CD8-positive, alpha-beta T cell (primary cell): ENCODE measurements at regions of chr10 and their contacts with region 1.

Region 1: GRCh38 chr10:118720685-118721538 is 33.9 kb downstream of the CACUL1 start:
- DNase-seq: peak in 8 of 9 experiments; percentile 32 to 75 (median 70)
- ATAC-seq: peak; percentile 59
- H3K4me3 ChIP-seq: no peak overlapping the region
- H3K4me3 Mint-ChIP-seq: no peak overlapping the region
- H3K27ac ChIP-seq: no peak overlapping the region
- H3K27ac Mint-ChIP-seq: no peak overlapping the region
- H3K4me1 ChIP-seq: no peaks in the 10 kb centered on the region
- H3K4me1 Mint-ChIP-seq: peaks cover 9% of the 10 kb centered on the region
- H3K27me3 ChIP-seq: no peaks in the 10 kb centered on the region
- H3K27me3 Mint-ChIP-seq: no peaks in the 10 kb centered on the region
- CTCF ChIP-seq: peak; percentile 95

Region 2: GRCh38 chr10:118594392-118595063 is 126.4 kb before region 1 on chr10:
- CTCF ChIA-PET with region 1: interaction called, 40 read pairs
- POLR2A ChIA-PET with region 1: no interaction called
- intact Hi-C with region 1: loop called (anchors 1 kb)
- DNase-seq: peak; percentile 3 to 63 (median 41)
- ATAC-seq: peak; percentile 61
- H3K4me3 ChIP-seq: peak overlapping the region in 1 of 2 experiments; percentile 1
- H3K4me3 Mint-ChIP-seq: no peak overlapping the region
- H3K27ac ChIP-seq: no peak overlapping the region
- H3K27ac Mint-ChIP-seq: no peak overlapping the region
- H3K4me1 ChIP-seq: peaks cover 25% of the 10 kb centered on the region
- H3K4me1 Mint-ChIP-seq: peaks cover 18% of the 10 kb centered on the region
- H3K27me3 ChIP-seq: peaks cover 22 to 23% of the 10 kb centered on the region in 2 experiments
- H3K27me3 Mint-ChIP-seq: peaks cover 55% of the 10 kb centered on the region
- CTCF ChIP-seq: peak; percentile 17

Region 3: GRCh38 chr10:118698421-118698820 is 22.5 kb before region 1 on chr10:
- CTCF ChIA-PET with region 1: interaction called, 5 read pairs
- POLR2A ChIA-PET with region 1: no interaction called
- intact Hi-C with region 1: loop called in 1 of 2 experiments (anchors 2 kb)
- DNase-seq: peak; percentile 59 to 92 (median 82)
- ATAC-seq: peak; percentile 100
- H3K4me3 ChIP-seq: peak overlapping the region; percentile 10 to 11
- H3K4me3 Mint-ChIP-seq: peak overlapping the region; percentile 75
- H3K27ac ChIP-seq: peak overlapping the region; percentile 18 to 40
- H3K27ac Mint-ChIP-seq: peak overlapping the region; percentile 91
- H3K4me1 ChIP-seq: peaks cover 57% of the 10 kb centered on the region
- H3K4me1 Mint-ChIP-seq: peaks cover 73% of the 10 kb centered on the region
- H3K27me3 ChIP-seq: no peaks in the 10 kb centered on the region
- H3K27me3 Mint-ChIP-seq: no peaks in the 10 kb centered on the region
- CTCF ChIP-seq: no peak

Region 4: DNA sequence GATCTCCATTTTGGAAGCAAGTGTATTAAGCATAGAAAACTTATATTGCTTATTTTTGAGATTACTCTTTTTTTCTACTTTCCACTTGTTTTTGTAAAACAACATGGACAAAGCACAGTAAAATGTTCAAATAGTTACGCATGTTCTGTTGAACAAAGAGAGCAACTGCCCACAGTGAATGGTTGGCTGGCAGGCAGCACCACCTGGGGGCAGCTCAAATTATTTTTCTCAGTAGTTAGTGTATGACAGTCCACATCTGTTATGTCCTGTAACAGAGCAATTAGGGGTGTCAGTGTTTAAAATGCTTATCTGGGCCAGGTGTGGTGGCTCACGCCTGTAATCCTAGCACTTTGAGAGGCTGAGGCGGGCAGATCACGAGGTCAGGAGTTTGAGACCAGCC is 80.0 kb after region 1 on chr10:
- CTCF ChIA-PET with region 1: no interaction called
- POLR2A ChIA-PET with region 1: interaction called, 3 read pairs
- intact Hi-C with region 1: loop called in 1 of 2 experiments (anchors 5 kb)
- DNase-seq: peak in 3 of 9 experiments; percentile 12 to 50 (median 21)
- ATAC-seq: no peak
- H3K4me3 ChIP-seq: no peak overlapping the region
- H3K4me3 Mint-ChIP-seq: no peak overlapping the region
- H3K27ac ChIP-seq: no peak overlapping the region
- H3K27ac Mint-ChIP-seq: no peak overlapping the region
- H3K4me1 ChIP-seq: no peaks in the 10 kb centered on the region
- H3K4me1 Mint-ChIP-seq: no peaks in the 10 kb centered on the region
- H3K27me3 ChIP-seq: no peaks in the 10 kb centered on the region
- H3K27me3 Mint-ChIP-seq: peaks cover 11% of the 10 kb centered on the region
- CTCF ChIP-seq: no peak

Region 5: GRCh38 chr10:119113751-119114732 is 393.1 kb after region 1 on chr10:
- CTCF ChIA-PET with region 1: no interaction called
- POLR2A ChIA-PET with region 1: no interaction called
- intact Hi-C with region 1: no loop called
- DNase-seq: no peak
- ATAC-seq: no peak
- H3K4me3 ChIP-seq: no peak overlapping the region
- H3K4me3 Mint-ChIP-seq: no peak overlapping the region
- H3K27ac ChIP-seq: no peak overlapping the region
- H3K27ac Mint-ChIP-seq: peak overlapping the region; percentile 57
- H3K4me1 ChIP-seq: no peaks in the 10 kb centered on the region
- H3K4me1 Mint-ChIP-seq: peaks cover 3% of the 10 kb centered on the region
- H3K27me3 ChIP-seq: no peaks in the 10 kb centered on the region
- H3K27me3 Mint-ChIP-seq: no peaks in the 10 kb centered on the region
- CTCF ChIP-seq: no peak

Region 6: GRCh38 chr10:119178372-119179119 is 457.6 kb after region 1 on chr10 and contains the start of gene PRDX3:
- CTCF ChIA-PET with region 1: no interaction called
- POLR2A ChIA-PET with region 1: no interaction called
- intact Hi-C with region 1: no loop called
- DNase-seq: peak; percentile 85 to 94 (median 93)
- ATAC-seq: peak; percentile 99
- H3K4me3 ChIP-seq: peak within 1 kb of the TSS; percentile 85 to 93
- H3K4me3 Mint-ChIP-seq: peak within 1 kb of the TSS; percentile 89
- H3K27ac ChIP-seq: peak within 1 kb of the TSS; percentile 73 to 75
- H3K27ac Mint-ChIP-seq: peak within 1 kb of the TSS; percentile 95
- H3K4me1 ChIP-seq: peaks cover 20% of the 10 kb centered on the region
- H3K4me1 Mint-ChIP-seq: peaks cover 35% of the 10 kb centered on the region
- H3K27me3 ChIP-seq: no peaks in the 10 kb centered on the region
- H3K27me3 Mint-ChIP-seq: no peaks in the 10 kb centered on the region
- CTCF ChIP-seq: no peak
- total RNA-seq, gene PRDX3: 7.6 to 11.7 TPM